Caco-2 (cell line): ENCODE measurements at regions of chr7 and their contacts with region 1.

Region 1: DNA sequence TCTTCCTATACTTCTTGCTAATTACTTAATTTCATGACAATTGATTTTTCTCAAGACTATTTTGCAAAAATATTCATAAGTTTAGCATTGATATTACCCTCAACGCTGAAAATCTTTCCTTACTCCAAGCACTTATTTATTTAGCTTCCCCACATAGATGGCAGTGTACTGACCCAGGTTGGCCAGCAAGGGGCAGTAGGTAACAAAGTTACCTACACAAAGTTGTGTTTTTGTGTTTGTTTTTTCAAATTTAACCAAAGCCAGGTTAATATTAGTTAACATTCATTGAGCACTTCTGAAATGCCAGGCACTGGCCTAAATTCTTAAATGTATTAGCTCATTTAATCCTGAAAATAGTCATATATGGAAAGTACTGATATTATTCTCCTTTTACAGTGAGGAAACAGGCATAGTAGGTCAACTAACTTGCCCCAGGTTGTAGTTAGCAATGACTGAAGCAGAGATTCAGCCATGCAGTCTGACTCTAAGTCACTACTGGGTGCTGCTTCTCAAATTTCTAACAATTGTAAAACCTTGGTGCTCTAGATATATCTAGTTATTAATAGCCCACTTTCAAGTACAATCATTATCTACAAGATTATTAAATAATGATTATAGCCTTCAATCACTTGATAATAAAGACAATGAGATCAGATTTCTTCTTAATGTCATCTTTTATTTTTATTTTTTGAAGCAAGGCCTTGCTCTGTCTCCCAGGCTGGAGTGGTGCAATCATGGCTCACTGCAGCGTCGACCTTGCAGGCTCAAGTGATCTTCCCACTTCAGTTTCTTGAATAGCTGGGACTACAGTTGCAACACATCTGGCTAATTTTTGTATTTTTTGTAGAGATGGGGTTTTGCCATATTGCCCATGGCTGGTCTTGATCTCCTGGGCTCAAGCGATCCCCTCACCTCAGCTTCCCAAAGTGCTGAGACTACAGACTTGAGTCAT is 5.8 kb upstream of the GGCT start:
- DNase-seq: peak in 1 of 2 experiments; percentile 38
- H3K4me3 ChIP-seq: no peak overlapping the region
- H3K4me3 Mint-ChIP-seq: no peak overlapping the region
- H3K27ac Mint-ChIP-seq: no peak overlapping the region
- H3K4me1 ChIP-seq: peaks cover 10% of the 10 kb centered on the region; the same call in 1 of the 2 replicates
- H3K4me1 Mint-ChIP-seq: peaks cover 20% of the 10 kb centered on the region
- H3K27me3 ChIP-seq: no peaks in the 10 kb centered on the region
- H3K27me3 Mint-ChIP-seq: no peaks in the 10 kb centered on the region
- CTCF ChIP-seq: peak; percentile 57 to 78

Region 2: GRCh38 chr7:30548762-30549344 is 38.5 kb after region 1 on chr7:
- CTCF ChIA-PET with region 1: interaction called, 5 read pairs
- POLR2A ChIA-PET with region 1: no interaction called
- intact Hi-C with region 1: loop called (anchors 1 kb)
- DNase-seq: peak; percentile 70 to 76
- H3K4me3 ChIP-seq: no peak overlapping the region
- H3K4me3 Mint-ChIP-seq: no peak overlapping the region
- H3K27ac Mint-ChIP-seq: no peak overlapping the region
- H3K4me1 ChIP-seq: peaks cover 9% of the 10 kb centered on the region
- H3K4me1 Mint-ChIP-seq: peaks cover 12% of the 10 kb centered on the region
- H3K27me3 ChIP-seq: no peaks in the 10 kb centered on the region
- H3K27me3 Mint-ChIP-seq: peaks cover 4% of the 10 kb centered on the region
- CTCF ChIP-seq: peak; percentile 76 to 88

Region 3: DNA sequence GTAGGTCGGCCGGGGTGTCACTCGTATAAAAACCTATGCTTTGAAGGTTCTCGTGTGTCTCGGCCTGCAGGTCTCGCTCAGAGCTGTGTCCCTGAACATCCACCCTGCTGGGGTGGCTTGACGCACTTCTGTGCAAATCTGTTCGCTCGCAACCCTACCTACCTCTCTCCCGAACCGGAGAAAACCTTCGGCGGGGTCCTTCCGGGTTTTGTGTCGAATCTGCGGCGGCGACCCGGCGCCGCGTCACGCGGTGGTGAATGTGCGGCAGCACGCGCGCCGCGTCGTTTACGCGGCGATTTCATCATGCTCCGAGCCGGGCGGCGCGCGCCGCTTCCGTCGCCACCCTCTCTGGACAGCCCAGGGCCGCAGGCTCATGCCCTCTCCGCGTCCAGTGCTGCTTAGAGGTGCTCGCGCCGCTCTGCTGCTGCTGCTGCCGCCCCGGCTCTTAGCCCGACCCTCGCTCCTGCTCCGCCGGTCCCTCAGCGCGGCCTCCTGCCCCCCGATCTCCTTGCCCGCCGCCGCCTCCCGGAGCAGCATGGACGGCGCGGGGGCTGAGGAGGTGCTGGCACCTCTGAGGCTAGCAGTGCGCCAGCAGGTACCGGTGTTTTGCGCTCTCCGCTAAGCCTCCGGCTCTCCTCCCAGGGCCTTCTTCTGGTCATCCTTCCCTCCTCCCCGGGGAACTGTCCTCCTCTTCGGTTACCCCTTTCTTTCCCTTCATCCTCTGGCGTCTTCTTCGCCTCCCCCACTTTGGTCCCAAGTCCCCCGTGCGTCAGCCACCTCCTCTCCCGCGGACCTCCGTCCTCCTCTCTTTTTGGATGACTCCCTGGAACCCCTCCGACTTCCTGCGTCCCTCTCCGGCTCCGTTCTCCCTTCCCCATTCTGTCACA is 84.4 kb after region 1 on chr7 and contains the start of gene GARS1:
- CTCF ChIA-PET with region 1: no interaction called
- POLR2A ChIA-PET with region 1: no interaction called
- intact Hi-C with region 1: no loop called
- DNase-seq: peak; percentile 92
- H3K4me3 ChIP-seq: peak within 1 kb of the TSS; percentile 100
- H3K4me3 Mint-ChIP-seq: peak within 1 kb of the TSS; percentile 100
- H3K27ac Mint-ChIP-seq: peak within 1 kb of the TSS; percentile 100
- H3K4me1 ChIP-seq: no peaks in the 10 kb centered on the region; the same call in none of the 2 replicates
- H3K4me1 Mint-ChIP-seq: peaks cover 7% of the 10 kb centered on the region
- H3K27me3 ChIP-seq: no peaks in the 10 kb centered on the region
- H3K27me3 Mint-ChIP-seq: peaks cover 2% of the 10 kb centered on the region
- CTCF ChIP-seq: no peak
- total RNA-seq, gene GARS1: 380 and 394 TPM in 2 replicates